K562 (cell line): ENCODE measurements at regions of chr1 and their contacts with region 1.

Region 1: DNA sequence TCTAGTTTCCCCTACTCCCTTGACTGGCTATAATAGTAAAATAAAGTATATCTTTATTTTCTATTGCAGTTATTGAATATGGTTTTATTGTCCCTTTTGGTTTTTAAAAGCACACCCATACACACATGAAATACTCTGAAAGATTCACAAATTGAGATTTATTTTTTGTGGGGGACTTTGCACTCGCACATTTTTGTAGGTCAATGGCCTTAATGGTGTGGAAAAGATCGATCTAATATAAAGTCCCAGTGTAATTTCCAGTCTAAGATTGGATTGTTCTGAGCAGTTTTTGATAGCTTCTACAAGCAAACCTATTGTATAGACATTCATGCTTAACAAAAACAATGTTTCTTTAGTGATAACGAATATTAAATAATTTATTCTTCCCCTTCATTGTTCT is 59.5 kb upstream of the INSL5 start:
- DNase-seq: no peak
- ATAC-seq: no peak
- H3K4me3 ChIP-seq: no peak overlapping the region
- H3K27ac ChIP-seq: no peak overlapping the region
- H3K4me1 ChIP-seq: no peaks in the 10 kb centered on the region
- H3K27me3 ChIP-seq: no peaks in the 10 kb centered on the region
- CTCF ChIP-seq: no peak
- EP300 ChIP-seq: no peak
- POLR2A ChIP-seq: no peak
- RAD21 ChIP-seq: no peak

Region 2: GRCh38 chr1:66924756-66925557 is 64.4 kb after region 1 on chr1 and contains the starts of genes DNAI4 and MIER1:
- CTCF ChIA-PET with region 1: no interaction called
- POLR2A ChIA-PET with region 1: no interaction called
- in situ Hi-C with region 1: no loop called
- intact Hi-C with region 1: loop called (anchors 5 kb)
- DNase-seq: peak; percentile 98 to 99 (median 99)
- ATAC-seq: peak; percentile 85
- H3K4me3 ChIP-seq: peak within 1 kb of the TSS; percentile 85
- H3K27ac ChIP-seq: peak within 1 kb of the TSS; percentile 81
- H3K4me1 ChIP-seq: peaks cover 0 to 16% of the 10 kb centered on the region in 2 experiments; a peak in 3 of 5 replicates
- H3K27me3 ChIP-seq: no peaks in the 10 kb centered on the region
- CTCF ChIP-seq: peak; percentile 6 to 37 (median 10); a peak in 3 of 6 replicates
- EP300 ChIP-seq: no peak; the same call in 1 of the 2 replicates
- POLR2A ChIP-seq: peak; percentile 88
- RAD21 ChIP-seq: peak in 1 of 2 experiments; percentile 9; a peak in 1 of 4 replicates
- polyA plus RNA-seq, gene DNAI4: 1.8 to 2.2 TPM
- polyA plus RNA-seq, gene MIER1: 21.5 to 23.7 TPM

Region 3: DNA sequence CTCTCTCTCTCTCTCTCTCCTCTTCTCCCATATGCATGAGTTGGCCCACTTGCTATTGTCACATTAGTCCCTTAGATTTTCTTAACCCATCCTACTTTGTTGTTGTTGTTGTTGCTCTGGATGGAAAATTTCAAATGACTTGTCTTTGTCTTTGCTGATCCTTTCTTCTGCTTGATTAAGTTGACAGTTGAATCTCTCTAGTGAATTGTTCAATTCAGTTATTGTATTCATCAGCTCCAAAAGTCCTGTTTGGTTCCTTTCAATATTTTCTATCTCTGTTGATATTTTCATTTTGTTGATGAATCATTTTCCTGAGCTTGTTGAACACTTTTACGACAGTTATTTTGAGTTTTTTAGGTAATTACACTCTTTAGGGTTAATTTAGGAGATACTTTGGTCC is 212.2 kb after region 1 on chr1:
- CTCF ChIA-PET with region 1: no interaction called
- POLR2A ChIA-PET with region 1: no interaction called
- in situ Hi-C with region 1: no loop called
- intact Hi-C with region 1: no loop called
- DNase-seq: no peak
- ATAC-seq: no peak
- H3K4me3 ChIP-seq: no peak overlapping the region
- H3K27ac ChIP-seq: no peak overlapping the region
- H3K4me1 ChIP-seq: no peaks in the 10 kb centered on the region
- H3K27me3 ChIP-seq: no peaks in the 10 kb centered on the region
- CTCF ChIP-seq: no peak
- EP300 ChIP-seq: no peak
- POLR2A ChIP-seq: no peak
- RAD21 ChIP-seq: no peak